Sciatic nerve (tissue), 2 donors: ENCODE measurements at regions of chr14 and their contacts with region 1.

Region 1: GRCh38 chr14:92280554-92281262 is 42.3 kb upstream of the SLC24A4 start:
- DNase-seq: no peak
- ATAC-seq: no peak

Region 2: DNA sequence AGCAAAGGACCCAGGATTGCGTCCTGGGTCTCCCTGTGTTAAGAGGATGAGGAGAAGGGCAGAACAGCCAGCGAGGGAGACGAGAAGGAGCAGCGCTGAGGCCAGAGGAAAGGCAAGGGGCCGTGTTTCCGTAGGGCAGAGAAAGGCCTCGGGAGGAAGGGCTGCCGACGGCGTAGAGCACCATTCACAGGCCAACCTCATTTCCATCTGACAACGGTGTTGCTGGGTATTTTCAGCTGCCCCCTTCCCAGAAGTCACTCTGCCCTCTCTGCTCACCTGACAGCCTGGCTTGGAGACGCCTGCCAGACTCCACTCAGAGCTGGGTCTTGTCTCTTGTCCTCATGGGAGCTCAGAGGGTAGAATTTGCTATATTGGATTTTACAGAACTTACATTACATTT is 1087.6 kb before region 1 on chr14:
- intact Hi-C with region 1: no loop called
- DNase-seq: no peak
- ATAC-seq: no peak

Region 3: DNA sequence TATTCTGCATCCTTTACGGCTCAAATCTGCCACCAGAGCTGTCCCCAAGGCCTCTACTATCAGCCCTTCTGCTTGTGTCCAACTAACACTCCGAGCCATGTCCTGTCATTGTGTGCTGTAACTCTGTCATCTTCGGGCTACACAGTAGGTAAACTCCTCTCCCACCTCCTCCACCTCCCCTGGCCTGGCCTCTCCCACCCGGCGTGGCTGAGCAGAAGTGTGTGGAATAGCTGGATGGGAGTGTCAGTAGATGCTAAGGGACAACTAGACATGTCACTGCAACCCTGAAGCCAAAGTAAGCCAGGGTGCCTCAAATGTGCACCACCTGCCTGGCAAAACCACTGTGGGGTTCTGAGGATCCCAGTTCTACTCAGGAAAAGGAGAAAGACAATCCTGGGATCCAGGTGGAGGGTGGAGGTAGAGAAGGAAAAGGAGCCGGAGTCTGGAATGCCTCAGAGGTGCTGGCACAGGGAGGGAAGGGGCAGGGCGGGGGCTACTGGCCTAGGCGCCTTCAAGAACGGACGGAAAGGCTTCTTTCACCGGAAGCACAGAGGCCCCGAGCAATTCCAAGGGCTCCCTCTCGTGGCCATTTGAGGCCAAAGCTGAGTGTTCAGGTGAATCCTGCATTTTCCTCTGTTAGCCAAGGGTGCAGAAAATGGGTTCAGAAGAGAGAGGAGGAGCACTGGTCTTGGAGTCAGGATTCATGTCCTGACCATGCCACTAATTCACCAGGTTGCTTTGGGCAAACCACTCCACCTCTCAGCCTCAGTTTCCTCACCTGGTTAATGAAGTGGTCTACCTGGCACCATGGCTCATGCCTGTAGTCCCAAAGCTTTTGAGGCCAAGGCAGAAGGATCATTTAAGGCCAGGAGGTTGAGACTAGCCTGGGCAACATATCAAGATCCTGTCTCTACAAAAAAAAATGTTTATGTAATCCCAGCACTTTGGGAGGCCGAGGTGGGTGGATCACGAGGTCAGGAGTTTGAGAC is 1625.9 kb after region 1 on chr14:
- intact Hi-C with region 1: loop called (anchors 5 kb)
- DNase-seq: no peak
- ATAC-seq: peak; percentile 50